ENCODE measurements at regions of chr14 and their contacts with region 1.

Region 1: DNA sequence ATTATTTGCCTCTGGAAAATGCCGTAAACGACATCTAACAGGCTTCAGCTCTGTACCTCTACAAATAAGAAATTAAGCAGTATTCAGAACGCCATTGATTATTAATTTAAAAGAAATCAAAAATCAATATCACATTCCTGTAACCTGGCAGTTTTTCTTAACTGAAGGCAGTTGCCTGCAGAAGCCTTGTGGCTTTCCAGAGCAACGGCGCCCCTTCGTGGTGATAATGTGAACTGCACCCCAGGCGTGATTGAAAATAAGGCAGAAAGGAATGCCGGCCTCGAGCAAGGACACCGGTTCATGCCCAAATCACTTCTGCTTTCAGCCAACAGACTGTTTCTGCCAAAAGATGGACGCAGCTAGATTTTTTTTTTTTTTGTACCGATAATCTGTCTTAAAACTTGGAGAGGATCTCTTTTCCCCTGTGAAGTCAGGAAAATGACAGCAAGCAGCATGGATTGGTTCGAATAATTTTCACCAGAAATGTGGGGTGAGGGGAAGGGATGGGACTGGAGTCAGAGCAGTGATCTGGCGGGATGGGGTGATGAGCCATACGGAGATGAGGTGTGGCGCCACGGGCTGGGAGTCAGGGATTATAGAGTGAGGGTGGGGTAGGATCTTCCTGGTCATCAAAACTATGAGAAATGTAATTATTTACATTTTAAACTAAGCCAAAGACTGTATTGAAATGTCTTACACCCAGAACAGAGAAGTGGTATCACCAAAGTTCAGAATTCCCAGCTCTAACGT is 473.0 kb downstream of the DPF3 start:
- DNase-seq: peak; percentile 95
- H3K4me3 Mint-ChIP-seq: peak overlapping the region; percentile 55
- H3K27ac Mint-ChIP-seq: peak overlapping the region; percentile 69
- H3K4me1 Mint-ChIP-seq: peaks cover 25% of the 10 kb centered on the region
- H3K27me3 Mint-ChIP-seq: peaks cover 4% of the 10 kb centered on the region

Region 2: DNA sequence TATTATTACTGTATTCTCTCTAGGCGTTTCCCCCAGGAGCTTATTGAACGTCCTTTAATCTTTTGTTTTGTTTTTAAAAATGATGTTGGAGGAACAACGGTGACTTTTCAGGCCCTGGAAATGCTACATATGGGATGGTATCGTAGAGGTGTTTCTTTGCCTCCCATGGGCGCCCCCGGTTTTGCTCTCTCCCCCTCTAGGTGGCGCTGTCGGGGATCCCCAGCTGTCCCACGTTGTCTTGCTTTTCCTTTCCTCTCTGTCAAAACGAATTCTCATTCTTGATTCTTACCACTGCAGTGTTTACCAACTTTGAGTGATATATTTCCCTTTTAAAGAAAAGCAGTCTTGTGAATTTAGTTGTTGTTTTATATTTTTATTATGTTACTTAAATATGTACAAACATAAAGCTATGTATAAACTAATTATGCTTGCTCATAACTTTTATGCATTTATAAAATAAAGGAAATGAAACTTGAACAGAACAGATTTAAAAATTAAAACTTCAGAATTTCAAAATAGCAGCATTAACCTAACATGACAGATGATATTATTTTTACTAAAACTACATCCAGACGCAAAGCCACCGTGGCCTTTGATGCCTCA is 316.8 kb before region 1 on chr14:
- intact Hi-C with region 1: loop called (anchors 5 kb)
- DNase-seq: peak; percentile 81
- H3K4me3 Mint-ChIP-seq: no peak overlapping the region
- H3K27ac Mint-ChIP-seq: no peak overlapping the region
- H3K4me1 Mint-ChIP-seq: peaks cover 2% of the 10 kb centered on the region
- H3K27me3 Mint-ChIP-seq: peaks cover 42% of the 10 kb centered on the region

Region 3: GRCh38 chr14:72318648-72319047 is 102.3 kb before region 1 on chr14:
- intact Hi-C with region 1: loop called (anchors 10 kb)
- DNase-seq: peak; percentile 68
- H3K4me3 Mint-ChIP-seq: peak overlapping the region; percentile 21
- H3K27ac Mint-ChIP-seq: no peak overlapping the region
- H3K4me1 Mint-ChIP-seq: peaks cover 10% of the 10 kb centered on the region
- H3K27me3 Mint-ChIP-seq: peaks cover 11% of the 10 kb centered on the region

Region 4: DNA sequence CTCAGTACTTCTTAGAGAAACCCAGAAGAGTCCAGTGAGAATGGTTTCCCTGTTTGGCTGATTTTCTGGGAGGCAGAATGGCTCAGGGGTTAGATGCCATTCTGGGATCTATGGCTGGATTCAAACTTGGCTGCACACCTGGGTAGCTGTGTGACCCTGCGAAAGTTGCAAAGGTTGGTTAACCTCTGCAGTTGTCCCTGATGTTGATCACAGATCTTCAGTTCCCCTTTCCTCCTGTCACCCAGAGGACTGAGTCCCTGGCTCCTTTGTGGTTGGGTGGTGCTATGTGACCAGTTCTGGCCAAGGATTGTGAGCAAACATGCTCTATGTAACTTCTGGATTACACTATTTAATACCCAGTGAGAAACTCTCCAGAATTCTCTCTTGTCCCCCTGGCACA is 70.7 kb before region 1 on chr14:
- intact Hi-C with region 1: no loop called
- DNase-seq: no peak
- H3K4me3 Mint-ChIP-seq: no peak overlapping the region
- H3K27ac Mint-ChIP-seq: no peak overlapping the region
- H3K4me1 Mint-ChIP-seq: no peaks in the 10 kb centered on the region
- H3K27me3 Mint-ChIP-seq: peaks cover 16% of the 10 kb centered on the region